ENCODE measurements at regions of chr20 and their contacts with region 1.

Region 1: DNA sequence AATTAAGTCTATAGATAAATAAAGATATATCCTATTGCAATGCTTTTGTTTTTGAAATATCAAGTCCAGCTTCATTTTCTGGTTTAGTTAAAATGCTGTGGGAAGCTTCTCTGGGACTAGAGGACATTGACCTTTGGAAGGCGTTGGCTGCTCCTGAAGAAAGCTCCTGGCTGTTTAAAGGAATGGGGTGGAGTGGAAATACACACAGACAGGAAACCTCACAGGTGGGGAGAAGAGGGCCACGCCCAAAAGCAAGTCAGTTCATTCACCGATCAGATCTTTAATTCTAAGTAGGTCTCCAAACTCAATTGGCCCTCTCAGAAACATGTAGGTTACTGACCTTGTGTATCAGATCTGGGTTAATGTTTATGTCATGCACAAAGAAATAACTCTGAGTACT is 59.6 kb downstream of the SPTLC3 start:
- DNase-seq: no peak
- ATAC-seq: no peak
- H3K4me3 ChIP-seq: no peak overlapping the region
- H3K27ac ChIP-seq: no peak overlapping the region
- H3K4me1 ChIP-seq: peaks cover 0 to 12% (median 0%) of the 10 kb centered on the region in 9 donors
- H3K27me3 ChIP-seq: no peaks in the 10 kb centered on the region
- CTCF ChIP-seq: no peak

Region 2: DNA sequence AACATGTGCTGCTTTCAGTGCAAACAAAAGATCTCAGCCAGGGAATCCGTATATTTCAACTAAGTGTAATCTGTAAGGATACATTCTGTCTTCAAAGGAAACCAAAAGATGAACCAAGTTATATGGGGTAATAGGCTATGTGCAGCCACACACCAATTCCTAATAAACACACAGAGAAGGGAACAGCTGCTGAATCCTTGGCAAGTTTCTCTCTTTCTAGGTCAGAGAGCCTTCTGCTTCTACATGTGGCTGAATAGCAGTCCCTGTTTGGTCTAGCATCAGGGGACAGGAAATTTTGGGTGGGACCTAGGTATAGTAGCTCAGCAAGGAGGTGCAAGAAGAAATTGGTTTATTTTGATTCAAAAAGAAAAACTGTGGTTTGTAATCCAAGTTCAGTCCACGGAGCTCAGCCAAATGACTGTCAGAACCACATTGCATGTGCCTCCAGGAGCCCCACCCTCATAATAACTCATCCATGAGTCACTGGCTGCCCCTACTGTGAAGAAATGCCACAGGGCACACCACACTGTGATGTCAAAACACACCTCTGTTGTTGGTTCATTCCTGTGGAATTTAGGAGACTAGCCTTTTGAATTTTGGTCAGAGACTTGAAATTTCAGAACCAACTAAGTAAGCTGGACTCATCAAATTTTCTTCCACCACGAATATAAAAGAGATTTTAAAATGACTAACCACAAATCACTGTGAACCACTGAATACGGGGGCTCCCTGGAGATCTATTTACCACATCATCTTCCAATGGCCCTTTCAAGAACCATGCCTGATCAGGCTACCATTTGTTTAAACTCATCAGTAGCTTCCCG is 38.5 kb before region 1 on chr20:
- intact Hi-C with region 1: loop called in 1 of 10 experiments (anchors 5 kb)
- DNase-seq: no peak
- ATAC-seq: peak in 2 of 8 donors; percentile 27 to 75
- H3K4me3 ChIP-seq: no peak overlapping the region
- H3K27ac ChIP-seq: no peak overlapping the region
- H3K4me1 ChIP-seq: peaks cover 0 to 31% (median 13%) of the 10 kb centered on the region in 9 donors
- H3K27me3 ChIP-seq: no peaks in the 10 kb centered on the region
- CTCF ChIP-seq: no peak

Measured in heart right ventricle (tissue), 16 donors.